ENCODE measurements at regions of chrX and their contacts with region 1.

Region 1: DNA sequence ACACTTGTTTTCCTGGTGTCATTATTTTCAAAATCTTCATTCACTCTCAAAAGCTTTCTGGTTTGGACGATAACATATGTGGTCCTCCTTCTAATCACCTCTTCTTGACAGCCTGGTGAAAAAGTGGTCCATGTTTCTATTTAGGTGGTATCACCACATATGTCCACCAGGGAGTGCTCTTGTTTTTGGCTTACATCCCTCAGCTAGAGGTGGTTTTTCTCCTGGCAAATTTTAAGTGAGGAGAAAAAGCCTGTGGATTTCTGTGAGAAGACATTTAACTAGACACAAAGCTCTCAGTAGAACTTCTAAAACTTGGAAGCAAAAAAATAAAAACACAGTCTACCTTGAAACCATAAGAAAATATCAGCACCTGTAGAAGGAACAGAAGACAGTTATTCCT is 58.0 kb upstream of the FRMPD4 start:
- DNase-seq: peak; percentile 55
- ATAC-seq: no peak
- H3K4me3 ChIP-seq: no peak overlapping the region
- H3K27ac ChIP-seq: no peak overlapping the region
- H3K4me1 ChIP-seq: no peaks in the 10 kb centered on the region
- H3K27me3 ChIP-seq: peaks cover 2% of the 10 kb centered on the region; the same call in 1 of the 2 replicates
- CTCF ChIP-seq: peak; percentile 66
- POLR2A ChIP-seq: no peak
- RAD21 ChIP-seq: peak; percentile 80

Region 2: GRCh38 chrX:12138361-12139313 is 58.4 kb after region 1 on chrX and contains the start of gene FRMPD4:
- CTCF ChIA-PET with region 1: no interaction called
- POLR2A ChIA-PET with region 1: no interaction called
- dilution Hi-C with region 1: no loop called
- in situ Hi-C with region 1: no loop called
- intact Hi-C with region 1: loop called (anchors 5 kb)
- DNase-seq: peak; percentile 24
- ATAC-seq: peak; percentile 72
- H3K4me3 ChIP-seq: peak within 1 kb of the TSS; percentile 61
- H3K27ac ChIP-seq: no peak within 1 kb of the TSS; the same call in 1 of the 2 replicates
- H3K4me1 ChIP-seq: peaks cover 2% of the 10 kb centered on the region; the same call in 1 of the 2 replicates
- H3K27me3 ChIP-seq: peaks cover 2% of the 10 kb centered on the region; the same call in 1 of the 2 replicates
- CTCF ChIP-seq: peak; percentile 34
- POLR2A ChIP-seq: no peak
- RAD21 ChIP-seq: peak; percentile 46
- total RNA-seq, gene FRMPD4: 1.1 TPM in 2 replicates

Region 3: DNA sequence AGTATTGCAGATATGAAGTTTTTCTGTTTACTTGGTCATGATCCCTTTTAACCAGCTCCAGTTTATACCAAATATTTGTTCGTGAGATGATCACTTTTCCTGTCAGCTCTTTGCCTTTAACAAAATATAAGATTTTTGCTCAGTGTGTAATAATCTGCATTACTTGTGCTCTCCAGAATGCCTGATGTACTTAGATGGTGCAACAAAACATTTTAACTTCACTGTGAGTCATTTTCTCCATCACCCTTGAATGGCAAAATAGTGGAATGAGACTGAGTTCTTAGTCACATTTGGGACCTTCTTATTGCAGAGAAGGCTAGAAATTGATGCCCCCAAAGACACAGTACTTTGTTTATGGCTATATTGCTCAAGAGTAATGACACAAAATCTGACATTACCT is 310.0 kb after region 1 on chrX:
- CTCF ChIA-PET with region 1: no interaction called
- POLR2A ChIA-PET with region 1: no interaction called
- dilution Hi-C with region 1: no loop called
- in situ Hi-C with region 1: no loop called
- intact Hi-C with region 1: no loop called
- DNase-seq: peak; percentile 52
- ATAC-seq: peak; percentile 51
- H3K4me3 ChIP-seq: no peak overlapping the region
- H3K27ac ChIP-seq: no peak overlapping the region
- H3K4me1 ChIP-seq: no peaks in the 10 kb centered on the region
- H3K27me3 ChIP-seq: no peaks in the 10 kb centered on the region
- CTCF ChIP-seq: no peak
- POLR2A ChIP-seq: no peak
- RAD21 ChIP-seq: no peak

Region 4: GRCh38 chrX:12447448-12448064 is 367.3 kb after region 1 on chrX:
- CTCF ChIA-PET with region 1: no interaction called
- POLR2A ChIA-PET with region 1: no interaction called
- dilution Hi-C with region 1: no loop called
- in situ Hi-C with region 1: no loop called
- intact Hi-C with region 1: loop called (anchors 1 kb)
- DNase-seq: peak; percentile 95
- ATAC-seq: peak; percentile 91
- H3K4me3 ChIP-seq: no peak overlapping the region
- H3K27ac ChIP-seq: peak overlapping the region; percentile 64
- H3K4me1 ChIP-seq: 0 out of 2 replicates have a peak, but pooled peaks cover 1% of the 10 kb centered on the region
- H3K27me3 ChIP-seq: no peaks in the 10 kb centered on the region
- CTCF ChIP-seq: peak; percentile 54
- POLR2A ChIP-seq: no peak
- RAD21 ChIP-seq: peak; percentile 64

Region 5: DNA sequence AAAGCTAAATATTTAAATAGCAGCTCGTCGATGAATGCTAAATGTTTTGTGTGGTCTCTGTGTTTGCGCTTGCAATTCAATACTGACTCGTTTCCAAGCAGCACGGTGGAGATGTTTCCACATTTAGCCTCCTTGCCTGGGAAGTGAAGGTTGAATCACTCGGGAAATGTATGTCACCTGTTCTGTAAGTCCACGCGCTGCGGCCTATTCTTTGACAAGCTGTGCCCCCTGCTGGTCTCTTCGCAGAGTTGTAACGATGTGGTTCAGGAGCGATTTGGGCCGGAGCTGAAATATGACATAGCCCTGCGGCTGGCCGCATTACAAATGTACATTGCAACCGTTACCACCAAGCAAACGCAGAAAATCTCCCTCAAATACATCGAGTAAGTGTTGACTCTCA is 621.4 kb after region 1 on chrX:
- CTCF ChIA-PET with region 1: interaction called, 5 read pairs
- POLR2A ChIA-PET with region 1: no interaction called
- dilution Hi-C with region 1: no loop called
- in situ Hi-C with region 1: loop called (anchors 25 kb)
- intact Hi-C with region 1: loop called (anchors 1 kb)
- DNase-seq: peak; percentile 68
- ATAC-seq: peak; percentile 63
- H3K4me3 ChIP-seq: no peak overlapping the region
- H3K27ac ChIP-seq: no peak overlapping the region
- H3K4me1 ChIP-seq: no peaks in the 10 kb centered on the region
- H3K27me3 ChIP-seq: no peaks in the 10 kb centered on the region
- CTCF ChIP-seq: peak; percentile 57
- POLR2A ChIP-seq: no peak
- RAD21 ChIP-seq: peak; percentile 73

Region 6: DNA sequence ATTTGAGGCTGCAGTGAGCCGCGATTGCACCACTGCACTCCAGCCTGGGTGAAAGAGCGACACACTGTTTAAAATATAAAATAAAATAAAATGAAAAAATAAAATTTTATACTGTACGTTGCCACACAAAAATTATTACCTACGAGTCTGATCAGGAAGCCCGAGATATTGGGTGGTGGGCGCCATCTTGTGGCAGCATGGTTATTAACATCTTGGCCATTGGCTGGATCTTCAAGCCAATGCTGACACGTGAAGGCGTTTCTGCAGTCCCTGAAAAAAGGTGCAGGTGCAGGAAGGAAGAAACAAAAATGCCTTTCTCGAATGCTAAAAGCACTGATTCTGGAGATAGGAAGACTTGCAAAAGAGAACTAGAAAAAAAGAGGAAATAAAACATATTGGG is 821.2 kb after region 1 on chrX:
- CTCF ChIA-PET with region 1: no interaction called
- POLR2A ChIA-PET with region 1: no interaction called
- dilution Hi-C with region 1: no loop called
- in situ Hi-C with region 1: no loop called
- intact Hi-C with region 1: loop called (anchors 10 kb)
- DNase-seq: peak; percentile 39
- ATAC-seq: peak; percentile 72
- H3K4me3 ChIP-seq: no peak overlapping the region
- H3K27ac ChIP-seq: no peak overlapping the region
- H3K4me1 ChIP-seq: no peaks in the 10 kb centered on the region
- H3K27me3 ChIP-seq: no peaks in the 10 kb centered on the region
- CTCF ChIP-seq: peak; percentile 60
- POLR2A ChIP-seq: no peak
- RAD21 ChIP-seq: peak; percentile 50; the same call in 1 of the 2 replicates

Region 7: GRCh38 chrX:13952581-13952980 is 1872.3 kb after region 1 on chrX:
- CTCF ChIA-PET with region 1: no interaction called
- POLR2A ChIA-PET with region 1: no interaction called
- dilution Hi-C with region 1: no loop called
- in situ Hi-C with region 1: no loop called
- intact Hi-C with region 1: no loop called
- DNase-seq: no peak
- ATAC-seq: no peak
- H3K4me3 ChIP-seq: no peak overlapping the region
- H3K27ac ChIP-seq: no peak overlapping the region
- H3K4me1 ChIP-seq: no peaks in the 10 kb centered on the region
- H3K27me3 ChIP-seq: peaks cover 10% of the 10 kb centered on the region
- CTCF ChIP-seq: no peak
- POLR2A ChIP-seq: no peak
- RAD21 ChIP-seq: no peak

Measured in IMR-90 (cell line).